GM12878 (cell line): ENCODE measurements at regions of chr2 and their contacts with region 1.

Region 1: GRCh38 chr2:152466980-152467676 is 132.2 kb downstream of the FMNL2 start:
- DNase-seq: peak; percentile 74
- ATAC-seq: peak; percentile 95
- H3K4me3 ChIP-seq: peak overlapping the region; percentile 33; the same call in 1 of the 2 replicates
- H3K27ac ChIP-seq: peak overlapping the region; percentile 62
- H3K4me1 ChIP-seq: peaks cover 23% of the 10 kb centered on the region
- H3K27me3 ChIP-seq: no peaks in the 10 kb centered on the region
- CTCF ChIP-seq: no peak
- EP300 ChIP-seq: peak in 1 of 2 experiments; percentile 91; a peak in 2 of 4 replicates
- POLR2A ChIP-seq: no peak
- RAD21 ChIP-seq: no peak

Region 2: DNA sequence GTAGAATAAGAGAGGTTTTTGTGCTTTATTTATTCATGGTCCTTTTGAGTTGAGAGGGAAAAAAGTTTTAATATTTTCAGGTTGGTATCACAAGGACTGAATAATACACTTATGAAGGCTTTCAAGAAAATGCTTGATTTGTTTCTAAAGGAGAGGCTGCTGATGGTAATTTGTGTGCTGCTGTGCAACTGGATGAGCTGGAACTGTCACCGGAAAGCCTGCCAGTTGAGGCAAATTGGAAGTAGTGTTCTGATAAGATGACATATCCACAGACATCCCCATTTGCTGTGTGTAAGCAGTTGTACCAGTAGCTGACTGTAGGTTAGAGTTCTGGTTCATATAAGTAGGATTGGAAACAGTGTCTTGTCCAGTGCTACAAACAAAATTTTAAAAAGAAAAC is 346.7 kb before region 1 on chr2:
- CTCF ChIA-PET with region 1: no interaction called
- POLR2A ChIA-PET with region 1: no interaction called
- RAD21 ChIA-PET with region 1: no interaction called
- SMC1A ChIA-PET with region 1: no interaction called
- in situ Hi-C with region 1: no loop called
- intact Hi-C with region 1: no loop called
- DNase-seq: no peak
- ATAC-seq: no peak
- H3K4me3 ChIP-seq: no peak overlapping the region
- H3K27ac ChIP-seq: no peak overlapping the region
- H3K4me1 ChIP-seq: no peaks in the 10 kb centered on the region
- H3K27me3 ChIP-seq: no peaks in the 10 kb centered on the region
- CTCF ChIP-seq: no peak
- EP300 ChIP-seq: no peak
- POLR2A ChIP-seq: no peak
- RAD21 ChIP-seq: no peak

Region 3: GRCh38 chr2:152175458-152176325 is 291.4 kb before region 1 on chr2 and contains the start of gene STAM2:
- CTCF ChIA-PET with region 1: interaction called, 3 read pairs
- POLR2A ChIA-PET with region 1: no interaction called
- RAD21 ChIA-PET with region 1: interaction called, 7 read pairs
- SMC1A ChIA-PET with region 1: interaction called, 13 read pairs
- in situ Hi-C with region 1: no loop called
- intact Hi-C with region 1: loop called (anchors 10 kb)
- DNase-seq: peak; percentile 72
- ATAC-seq: peak; percentile 85
- H3K4me3 ChIP-seq: peak within 1 kb of the TSS; percentile 80
- H3K27ac ChIP-seq: peak within 1 kb of the TSS; percentile 99
- H3K4me1 ChIP-seq: peaks cover 8% of the 10 kb centered on the region; the same call in 1 of the 2 replicates
- H3K27me3 ChIP-seq: no peaks in the 10 kb centered on the region
- CTCF ChIP-seq: peak; percentile 96 to 99 (median 98); a peak in 5 of 6 replicates
- EP300 ChIP-seq: no peak; a peak in 1 of 4 replicates
- POLR2A ChIP-seq: peak; percentile 93
- RAD21 ChIP-seq: peak; percentile 84
- polyA plus RNA-seq, gene STAM2: 4.4 to 7.8 TPM

Region 4: GRCh38 chr2:152304836-152305235 is 162.3 kb before region 1 on chr2:
- CTCF ChIA-PET with region 1: no interaction called
- POLR2A ChIA-PET with region 1: no interaction called
- RAD21 ChIA-PET with region 1: no interaction called
- SMC1A ChIA-PET with region 1: no interaction called
- in situ Hi-C with region 1: no loop called
- intact Hi-C with region 1: no loop called
- DNase-seq: no peak
- ATAC-seq: no peak
- H3K4me3 ChIP-seq: no peak overlapping the region
- H3K27ac ChIP-seq: no peak overlapping the region
- H3K4me1 ChIP-seq: no peaks in the 10 kb centered on the region
- H3K27me3 ChIP-seq: no peaks in the 10 kb centered on the region
- CTCF ChIP-seq: no peak
- EP300 ChIP-seq: no peak
- POLR2A ChIP-seq: no peak
- RAD21 ChIP-seq: no peak

Region 5: DNA sequence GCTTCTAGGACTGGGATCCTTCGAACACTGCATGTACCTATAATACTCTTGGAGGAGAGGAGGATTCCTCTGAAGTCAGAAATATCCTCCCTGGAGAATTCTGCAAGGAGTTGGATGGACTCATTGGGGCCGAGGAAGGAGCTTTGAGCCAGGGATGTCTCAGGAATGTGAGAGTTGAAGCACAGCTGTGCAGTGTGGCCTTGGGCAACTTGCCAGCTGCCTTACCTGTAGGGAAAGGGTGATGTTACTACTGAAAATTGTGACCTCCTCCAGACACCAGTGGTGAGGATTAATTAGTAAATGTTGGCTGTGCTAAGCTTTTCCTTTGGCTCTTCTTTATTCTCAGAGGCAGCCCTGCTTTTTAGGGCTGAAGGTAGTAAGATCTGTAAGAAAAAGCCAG is 90.7 kb before region 1 on chr2:
- CTCF ChIA-PET with region 1: no interaction called
- POLR2A ChIA-PET with region 1: no interaction called
- RAD21 ChIA-PET with region 1: no interaction called
- SMC1A ChIA-PET with region 1: no interaction called
- in situ Hi-C with region 1: no loop called
- intact Hi-C with region 1: no loop called
- DNase-seq: no peak
- ATAC-seq: no peak
- H3K4me3 ChIP-seq: no peak overlapping the region
- H3K27ac ChIP-seq: no peak overlapping the region
- H3K4me1 ChIP-seq: no peaks in the 10 kb centered on the region
- H3K27me3 ChIP-seq: no peaks in the 10 kb centered on the region
- CTCF ChIP-seq: no peak
- EP300 ChIP-seq: no peak
- POLR2A ChIP-seq: no peak
- RAD21 ChIP-seq: no peak

Region 6: GRCh38 chr2:152407204-152407721 is 59.9 kb before region 1 on chr2:
- CTCF ChIA-PET with region 1: interaction called, 3 read pairs
- POLR2A ChIA-PET with region 1: interaction called, 5 read pairs
- RAD21 ChIA-PET with region 1: interaction called, 37 read pairs
- SMC1A ChIA-PET with region 1: interaction called, 32 read pairs
- in situ Hi-C with region 1: no loop called
- intact Hi-C with region 1: no loop called
- DNase-seq: peak; percentile 55
- ATAC-seq: peak; percentile 95
- H3K4me3 ChIP-seq: peak overlapping the region; percentile 20; the same call in 1 of the 2 replicates
- H3K27ac ChIP-seq: peak overlapping the region; percentile 77
- H3K4me1 ChIP-seq: peaks cover 18% of the 10 kb centered on the region
- H3K27me3 ChIP-seq: no peaks in the 10 kb centered on the region
- CTCF ChIP-seq: 0 out of 6 replicates have a peak, but pooled peaks of 1 of the 3 experiments have one; percentile 1
- EP300 ChIP-seq: 0 out of 4 replicates have a peak, but pooled peaks of 1 of the 2 experiments have one; percentile 32
- POLR2A ChIP-seq: peak; percentile 50; the same call in 1 of the 2 replicates
- RAD21 ChIP-seq: no peak

Region 7: GRCh38 chr2:152485954-152486736 is 19.0 kb after region 1 on chr2:
- CTCF ChIA-PET with region 1: interaction called, 12 read pairs
- POLR2A ChIA-PET with region 1: interaction called, 3 read pairs
- RAD21 ChIA-PET with region 1: interaction called, 15 read pairs
- SMC1A ChIA-PET with region 1: interaction called, 98 read pairs
- in situ Hi-C with region 1: no loop called
- intact Hi-C with region 1: no loop called
- DNase-seq: no peak
- ATAC-seq: peak; percentile 27; the same call in 2 of the 3 replicates
- H3K4me3 ChIP-seq: no peak overlapping the region
- H3K27ac ChIP-seq: no peak overlapping the region
- H3K4me1 ChIP-seq: peaks cover 4% of the 10 kb centered on the region
- H3K27me3 ChIP-seq: no peaks in the 10 kb centered on the region
- CTCF ChIP-seq: no peak
- EP300 ChIP-seq: no peak
- POLR2A ChIP-seq: no peak
- RAD21 ChIP-seq: no peak

Region 8: DNA sequence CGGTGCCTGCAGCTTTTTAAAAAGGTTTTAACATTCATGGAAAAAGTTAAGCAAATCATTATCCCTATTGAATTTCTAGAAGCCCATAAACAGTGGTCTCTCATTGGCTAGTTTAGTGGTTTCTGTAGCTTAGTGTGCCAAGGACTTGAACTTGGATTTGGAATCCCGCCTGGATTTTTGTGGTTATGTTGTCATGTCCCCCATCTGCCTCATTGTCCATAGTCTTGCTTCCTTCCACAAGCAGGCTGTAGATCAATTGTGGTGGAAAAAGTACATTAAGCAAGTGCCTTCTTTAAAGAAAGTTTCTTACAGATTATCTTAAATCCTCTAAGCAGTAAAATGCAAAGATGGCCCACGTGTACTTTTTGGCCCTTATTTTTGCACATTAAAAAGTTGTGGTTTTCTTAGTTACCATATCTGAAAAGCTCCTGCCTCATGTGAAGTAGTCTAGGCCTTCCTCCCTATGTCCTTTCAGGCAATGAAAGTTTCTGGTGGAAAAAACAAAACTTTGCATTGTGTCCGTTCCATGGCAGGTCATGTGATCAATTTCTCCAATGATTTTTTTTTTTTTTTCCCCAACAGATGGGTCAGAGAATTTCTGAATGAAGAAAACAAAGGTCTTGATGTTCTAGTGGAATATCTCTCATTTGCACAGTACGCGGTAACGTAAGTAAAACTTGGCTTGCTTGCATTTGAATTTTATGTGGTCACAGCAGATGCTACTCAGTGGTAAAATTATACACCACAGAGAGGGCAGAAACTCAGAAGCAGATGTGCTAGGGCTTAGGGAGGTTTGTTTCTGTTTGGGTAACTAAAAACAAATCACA is 91.2 kb after region 1 on chr2:
- CTCF ChIA-PET with region 1: interaction called, 5 read pairs
- POLR2A ChIA-PET with region 1: no interaction called
- RAD21 ChIA-PET with region 1: interaction called, 13 read pairs
- SMC1A ChIA-PET with region 1: interaction called, 4 read pairs
- in situ Hi-C with region 1: no loop called
- intact Hi-C with region 1: no loop called
- DNase-seq: no peak
- ATAC-seq: no peak
- H3K4me3 ChIP-seq: no peak overlapping the region
- H3K27ac ChIP-seq: no peak overlapping the region
- H3K4me1 ChIP-seq: no peaks in the 10 kb centered on the region
- H3K27me3 ChIP-seq: no peaks in the 10 kb centered on the region
- CTCF ChIP-seq: no peak
- EP300 ChIP-seq: no peak
- POLR2A ChIP-seq: no peak
- RAD21 ChIP-seq: no peak

Region 9: DNA sequence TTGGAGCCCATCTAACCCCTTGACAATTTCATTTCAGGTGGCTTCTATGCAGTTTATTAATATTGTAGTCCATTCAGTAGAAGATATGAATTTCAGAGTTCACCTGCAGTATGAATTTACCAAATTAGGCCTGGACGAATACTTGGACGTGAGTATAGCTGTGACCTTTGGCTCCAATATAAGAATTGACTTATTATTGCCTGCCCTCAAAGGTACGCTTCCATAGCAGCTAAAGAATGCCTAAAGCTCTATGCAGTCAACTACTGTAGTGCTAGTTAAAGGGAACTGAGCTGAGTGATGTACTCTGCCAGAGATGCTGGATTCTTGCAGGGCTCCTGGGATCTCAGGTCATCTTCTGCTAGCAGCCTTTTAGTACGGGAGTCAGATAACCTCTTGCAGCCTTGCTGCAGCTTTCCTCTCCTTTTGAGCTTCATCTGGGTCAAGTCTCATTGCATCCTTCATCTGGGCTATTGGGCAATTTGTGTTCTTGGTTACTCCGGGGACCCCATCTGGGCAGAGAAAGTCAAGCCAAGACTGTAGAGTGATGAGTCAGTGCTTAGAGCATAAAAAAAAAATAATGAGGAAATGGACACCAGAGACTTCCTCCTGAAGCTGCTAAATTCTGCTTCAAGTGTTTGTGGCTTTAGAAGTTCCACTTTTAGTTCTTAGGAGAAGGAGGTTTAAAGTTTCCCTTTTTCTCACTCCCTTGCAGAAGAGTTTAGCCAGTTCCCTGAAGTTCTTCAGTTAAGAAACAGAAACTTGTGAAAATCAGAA is 144.5 kb after region 1 on chr2:
- CTCF ChIA-PET with region 1: interaction called, 4 read pairs
- POLR2A ChIA-PET with region 1: no interaction called
- RAD21 ChIA-PET with region 1: interaction called, 19 read pairs
- SMC1A ChIA-PET with region 1: interaction called, 11 read pairs
- in situ Hi-C with region 1: no loop called
- intact Hi-C with region 1: no loop called
- DNase-seq: peak; percentile 64
- ATAC-seq: peak; percentile 88
- H3K4me3 ChIP-seq: peak overlapping the region; percentile 49; the same call in 1 of the 2 replicates
- H3K27ac ChIP-seq: peak overlapping the region; percentile 64
- H3K4me1 ChIP-seq: peaks cover 20% of the 10 kb centered on the region
- H3K27me3 ChIP-seq: no peaks in the 10 kb centered on the region
- CTCF ChIP-seq: no peak
- EP300 ChIP-seq: peak in 1 of 2 experiments; percentile 71; a peak in 2 of 4 replicates
- POLR2A ChIP-seq: no peak
- RAD21 ChIP-seq: no peak

Region 10: DNA sequence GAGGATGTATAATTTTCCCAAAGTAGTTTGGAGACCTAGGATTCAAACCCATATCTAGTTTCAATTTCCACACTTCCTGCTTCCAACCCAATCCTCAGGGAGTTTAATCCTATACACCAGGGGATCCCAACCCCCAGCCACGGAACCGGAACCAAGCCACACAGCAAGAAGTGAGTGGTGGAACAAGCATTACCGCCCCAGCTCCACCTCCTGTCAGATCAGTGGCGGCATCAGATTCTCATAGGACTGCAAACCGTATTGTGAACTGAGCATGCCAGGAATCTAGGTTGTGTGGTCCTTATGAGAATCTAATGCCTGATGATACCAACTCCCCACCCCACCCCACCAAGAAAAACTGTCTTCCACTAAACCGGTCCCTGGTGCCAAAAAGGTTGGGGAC is 197.6 kb after region 1 on chr2:
- CTCF ChIA-PET with region 1: no interaction called
- POLR2A ChIA-PET with region 1: no interaction called
- RAD21 ChIA-PET with region 1: no interaction called
- SMC1A ChIA-PET with region 1: no interaction called
- in situ Hi-C with region 1: no loop called
- intact Hi-C with region 1: no loop called
- DNase-seq: no peak
- ATAC-seq: no peak
- H3K4me3 ChIP-seq: no peak overlapping the region
- H3K27ac ChIP-seq: no peak overlapping the region
- H3K4me1 ChIP-seq: no peaks in the 10 kb centered on the region
- H3K27me3 ChIP-seq: no peaks in the 10 kb centered on the region
- CTCF ChIP-seq: no peak
- EP300 ChIP-seq: no peak
- POLR2A ChIP-seq: no peak
- RAD21 ChIP-seq: no peak